ENCODE measurements at regions of chr7 and their contacts with region 1.

Region 1: DNA sequence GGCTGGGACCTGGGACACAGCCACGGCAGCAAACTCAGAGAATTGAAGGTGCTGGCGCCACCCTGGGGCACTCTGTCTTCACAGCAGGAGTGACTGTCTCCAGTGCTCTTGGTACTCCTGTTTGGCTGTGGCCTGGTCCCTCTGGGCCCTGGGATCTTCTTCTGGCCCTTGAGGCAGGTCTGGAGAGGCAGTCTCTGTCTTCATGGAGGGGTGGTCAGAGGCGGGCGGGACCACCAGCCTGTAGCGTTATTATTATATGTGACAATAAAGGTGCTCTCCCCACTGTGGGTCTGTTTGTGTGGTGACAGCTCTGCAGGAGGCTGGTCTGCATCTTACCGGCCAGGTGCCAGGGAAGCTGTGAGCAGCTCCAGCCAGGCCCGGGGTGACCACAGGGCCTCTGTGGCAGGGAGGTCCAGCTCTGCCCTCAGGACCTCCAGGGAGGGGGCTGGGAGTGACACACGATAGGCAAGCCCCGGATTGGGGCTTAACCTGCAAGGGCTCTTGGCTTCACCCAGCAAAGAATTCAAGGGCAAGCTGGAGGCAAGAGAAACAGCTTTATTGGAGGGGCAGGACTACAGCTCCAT is 70.3 kb downstream of the MYL10 start:
- DNase-seq: peak; percentile 15
- ATAC-seq: peak; percentile 72
- H3K4me3 ChIP-seq: no peak overlapping the region
- H3K27ac ChIP-seq: no peak overlapping the region
- H3K4me1 ChIP-seq: no peaks in the 10 kb centered on the region
- H3K27me3 ChIP-seq: no peaks in the 10 kb centered on the region
- CTCF ChIP-seq: peak; percentile 44; the same call in 1 of the 2 replicates

Region 2: GRCh38 chr7:101442521-101442981 is 116.3 kb before region 1 on chr7:
- CTCF ChIA-PET with region 1: no interaction called
- POLR2A ChIA-PET with region 1: no interaction called
- intact Hi-C with region 1: no loop called
- DNase-seq: peak; percentile 60
- ATAC-seq: no peak; the same call in 1 of the 2 replicates
- H3K4me3 ChIP-seq: no peak overlapping the region
- H3K27ac ChIP-seq: no peak overlapping the region
- H3K4me1 ChIP-seq: peaks cover 10% of the 10 kb centered on the region
- H3K27me3 ChIP-seq: no peaks in the 10 kb centered on the region
- CTCF ChIP-seq: no peak

Region 3: DNA sequence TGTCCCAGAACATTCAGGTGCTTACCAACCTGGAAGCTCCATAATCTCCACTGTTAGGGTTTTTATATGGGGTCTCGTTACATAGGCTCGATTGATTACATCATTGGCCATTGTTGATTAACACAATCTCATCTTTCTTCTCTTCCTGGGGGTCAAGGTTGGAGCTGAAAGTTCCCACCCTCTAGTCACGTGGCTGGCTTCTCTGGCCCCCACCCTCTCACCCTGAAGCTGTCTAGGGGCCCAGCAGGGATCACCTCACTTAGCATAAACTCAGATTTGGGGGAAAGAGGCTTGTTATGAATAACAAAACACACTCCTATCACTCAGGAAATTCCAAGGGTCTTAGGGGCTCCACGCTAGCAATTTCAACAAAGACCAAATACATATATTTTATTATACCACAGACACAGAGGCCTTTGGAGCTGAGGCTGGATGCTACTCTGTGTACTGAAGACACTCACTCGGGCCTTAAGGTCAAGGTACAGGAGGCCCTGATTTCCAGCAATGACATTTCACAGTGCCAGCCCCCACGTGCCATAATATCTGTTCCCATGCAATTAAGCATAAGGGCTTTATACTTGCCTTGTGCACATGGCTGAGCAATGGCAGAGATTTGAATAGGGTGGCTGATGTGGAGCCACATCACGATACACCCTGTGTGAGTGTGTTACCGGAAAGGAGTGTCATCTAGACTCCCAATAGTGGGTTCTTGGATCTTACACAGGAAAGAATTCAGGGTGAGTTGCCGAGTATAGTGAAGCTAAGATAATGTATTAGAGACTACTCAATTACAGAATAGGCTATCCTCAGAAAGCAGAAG is 88.0 kb before region 1 on chr7:
- CTCF ChIA-PET with region 1: no interaction called
- POLR2A ChIA-PET with region 1: no interaction called
- intact Hi-C with region 1: no loop called
- DNase-seq: no peak
- ATAC-seq: no peak
- H3K4me3 ChIP-seq: no peak overlapping the region
- H3K27ac ChIP-seq: no peak overlapping the region
- H3K4me1 ChIP-seq: no peaks in the 10 kb centered on the region
- H3K27me3 ChIP-seq: no peaks in the 10 kb centered on the region
- CTCF ChIP-seq: no peak

Region 4: GRCh38 chr7:101507791-101508252 is 51.0 kb before region 1 on chr7:
- CTCF ChIA-PET with region 1: no interaction called
- POLR2A ChIA-PET with region 1: no interaction called
- intact Hi-C with region 1: no loop called
- DNase-seq: peak; percentile 64
- ATAC-seq: no peak
- H3K4me3 ChIP-seq: no peak overlapping the region
- H3K27ac ChIP-seq: no peak overlapping the region
- H3K4me1 ChIP-seq: no peaks in the 10 kb centered on the region
- H3K27me3 ChIP-seq: no peaks in the 10 kb centered on the region
- CTCF ChIP-seq: peak; percentile 95

Region 5: DNA sequence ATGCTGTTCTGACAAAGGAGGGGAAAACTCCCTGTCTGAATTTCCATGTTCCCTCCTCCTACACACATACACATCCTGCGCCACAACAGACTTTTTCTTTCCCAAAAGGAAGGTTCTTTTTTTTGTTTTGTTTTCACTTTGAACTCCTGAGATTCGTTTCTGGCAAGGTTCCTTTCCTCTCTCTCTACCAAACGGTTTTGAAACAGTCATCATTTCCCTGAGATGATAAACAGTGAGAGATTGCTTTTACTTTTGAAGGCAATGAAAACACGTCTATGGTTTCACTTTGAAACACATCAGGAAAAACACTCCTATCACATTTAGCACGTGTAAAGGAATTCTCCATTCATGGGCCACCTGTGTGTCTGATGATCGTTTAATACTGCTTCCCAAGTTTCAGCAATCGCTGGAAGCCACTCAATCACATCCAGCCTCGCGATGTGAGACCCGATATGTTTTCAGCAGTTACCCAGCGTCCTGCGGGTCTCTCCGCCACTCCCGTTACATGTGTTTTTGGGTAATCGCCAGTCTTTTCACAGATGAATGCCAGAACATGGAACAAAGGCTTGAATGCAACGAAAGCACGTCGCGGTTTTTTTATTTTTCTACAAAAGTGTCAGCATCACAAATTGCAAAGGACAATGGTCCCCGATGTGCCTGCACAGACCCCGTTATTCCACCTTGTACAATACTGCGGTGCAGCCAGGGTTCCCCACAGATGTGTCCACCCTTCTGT is 195.8 kb after region 1 on chr7:
- CTCF ChIA-PET with region 1: no interaction called
- POLR2A ChIA-PET with region 1: no interaction called
- intact Hi-C with region 1: no loop called
- DNase-seq: peak; percentile 23
- ATAC-seq: peak; percentile 74
- H3K4me3 ChIP-seq: peak overlapping the region; percentile 80
- H3K27ac ChIP-seq: no peak overlapping the region
- H3K4me1 ChIP-seq: no peaks in the 10 kb centered on the region; the same call in 1 of the 2 replicates
- H3K27me3 ChIP-seq: no peaks in the 10 kb centered on the region
- CTCF ChIP-seq: no peak

Region 6: GRCh38 chr7:102009628-102010027 is 450.8 kb after region 1 on chr7:
- CTCF ChIA-PET with region 1: interaction called, 15 read pairs
- POLR2A ChIA-PET with region 1: no interaction called
- intact Hi-C with region 1: no loop called
- DNase-seq: no peak
- ATAC-seq: no peak
- H3K4me3 ChIP-seq: no peak overlapping the region
- H3K27ac ChIP-seq: no peak overlapping the region
- H3K4me1 ChIP-seq: peaks cover 8% of the 10 kb centered on the region
- H3K27me3 ChIP-seq: no peaks in the 10 kb centered on the region
- CTCF ChIP-seq: no peak

Region 7: GRCh38 chr7:102440078-102440795 is 881.4 kb after region 1 on chr7:
- CTCF ChIA-PET with region 1: interaction called, 10 read pairs
- POLR2A ChIA-PET with region 1: no interaction called
- intact Hi-C with region 1: no loop called
- DNase-seq: peak; percentile 90
- ATAC-seq: peak; percentile 98
- H3K4me3 ChIP-seq: no peak overlapping the region
- H3K27ac ChIP-seq: peak overlapping the region; percentile 28
- H3K4me1 ChIP-seq: peaks cover 11% of the 10 kb centered on the region
- H3K27me3 ChIP-seq: no peaks in the 10 kb centered on the region
- CTCF ChIP-seq: no peak

Measured in PC-3 (cell line).